ENCODE measurements at regions of chr2 and their contacts with region 1.

Region 1: DNA sequence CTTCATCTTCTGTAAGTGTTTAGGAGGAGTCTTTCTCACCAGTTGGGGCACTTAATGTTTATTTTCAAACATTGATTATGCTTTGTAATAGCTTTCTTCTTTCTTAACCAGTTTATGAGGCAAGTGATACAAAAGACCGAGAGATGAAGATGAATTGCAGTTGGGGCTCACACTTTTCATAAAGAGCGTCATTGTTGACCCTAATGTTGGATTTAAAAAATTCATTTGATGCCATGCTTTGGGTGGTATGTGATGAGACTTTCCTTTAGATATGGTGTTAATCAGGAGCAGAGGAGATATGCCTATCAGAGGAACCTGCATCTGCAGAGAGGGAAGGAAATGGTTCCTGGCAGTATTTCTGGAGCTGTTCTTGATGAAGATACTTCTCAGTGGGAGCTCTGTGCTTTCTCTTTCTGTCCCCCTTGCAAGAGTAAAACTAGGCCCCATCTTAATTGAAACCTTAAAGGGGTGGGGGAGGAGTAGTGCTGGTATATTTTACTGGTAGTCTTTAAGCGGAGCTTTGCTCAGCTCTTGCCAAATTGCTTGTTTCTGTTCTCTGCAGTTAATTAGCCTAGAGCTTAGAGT is 2.3 kb downstream of the EML4 start:
- DNase-seq: no peak
- ATAC-seq: no peak
- H3K4me3 ChIP-seq: peak overlapping the region; percentile 71; the same call in 2 of the 3 replicates
- H3K27ac ChIP-seq: peak overlapping the region in 1 of 2 experiments; percentile 19; a peak in 2 of 6 replicates
- H3K4me1 ChIP-seq: peaks cover 29% of the 10 kb centered on the region
- CTCF ChIP-seq: no peak
- EP300 ChIP-seq: no peak
- POLR2A ChIP-seq: no peak
- RAD21 ChIP-seq: no peak

Region 2: GRCh38 chr2:42156721-42157120 is 14.8 kb before region 1 on chr2:
- CTCF ChIA-PET with region 1: interaction called, 10 read pairs
- POLR2A ChIA-PET with region 1: no interaction called
- DNase-seq: no peak
- ATAC-seq: peak in 1 of 2 experiments; percentile 25; a peak in 2 of 6 replicates
- H3K4me3 ChIP-seq: no peak overlapping the region
- H3K27ac ChIP-seq: no peak overlapping the region
- H3K4me1 ChIP-seq: no peaks in the 10 kb centered on the region
- CTCF ChIP-seq: no peak
- EP300 ChIP-seq: no peak
- POLR2A ChIP-seq: no peak
- RAD21 ChIP-seq: no peak

Region 3: GRCh38 chr2:42230891-42231290 is 59.4 kb after region 1 on chr2:
- CTCF ChIA-PET with region 1: no interaction called
- POLR2A ChIA-PET with region 1: no interaction called
- DNase-seq: no peak
- ATAC-seq: no peak
- H3K4me3 ChIP-seq: no peak overlapping the region
- H3K27ac ChIP-seq: no peak overlapping the region
- H3K4me1 ChIP-seq: peaks cover 17% of the 10 kb centered on the region; the same call in 1 of the 3 replicates
- CTCF ChIP-seq: no peak
- EP300 ChIP-seq: no peak
- POLR2A ChIP-seq: no peak
- RAD21 ChIP-seq: no peak

Measured in A549 (cell line).